Right cardiac atrium (tissue), 5 donors: ENCODE measurements at regions of chr6 and their contacts with region 1.

Region 1: DNA sequence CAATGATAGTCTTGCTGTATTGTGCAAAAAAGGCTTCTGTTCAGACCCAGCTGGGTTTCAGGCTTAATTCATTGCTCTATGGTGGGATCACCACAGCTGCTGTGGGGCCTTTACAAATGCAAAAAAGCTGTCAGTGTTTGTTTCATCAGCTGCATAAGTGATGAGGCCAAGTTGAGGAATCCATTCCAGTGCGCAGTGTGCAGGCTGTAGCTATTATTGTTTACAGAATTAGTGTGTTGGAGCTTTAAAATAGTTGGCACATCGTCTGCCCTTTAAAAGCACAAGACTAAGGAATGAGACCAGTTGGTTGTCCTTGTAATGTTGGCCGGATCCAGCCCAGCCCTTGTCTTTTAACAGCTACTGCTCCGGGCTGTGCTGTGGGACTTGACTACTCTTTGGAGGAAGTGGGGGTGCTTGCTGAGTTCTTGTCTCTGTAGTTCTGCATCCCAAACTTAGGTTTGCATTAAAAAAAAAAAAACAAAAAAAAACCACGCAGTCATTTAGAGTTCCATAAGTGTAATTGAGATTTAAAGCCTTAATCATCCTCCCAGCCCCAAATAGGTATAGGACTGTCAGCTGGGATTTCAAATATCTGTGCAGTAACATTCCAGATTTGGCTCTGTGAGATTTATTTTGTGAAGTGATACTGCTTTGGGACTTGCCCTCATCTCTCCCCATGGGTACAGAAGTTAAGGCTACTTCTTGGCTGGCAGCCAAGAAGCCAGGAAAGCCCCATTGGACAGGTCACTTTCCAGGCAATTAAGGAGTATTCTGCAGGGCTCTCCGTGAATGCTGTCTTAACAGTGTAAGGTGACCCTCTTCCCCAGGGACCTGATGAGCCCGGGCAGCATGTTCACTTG is 19.3 kb downstream of the JARID2 start:
- DNase-seq: peak in 1 of 3 donors; percentile 75
- ATAC-seq: peak; percentile 52 to 61
- H3K4me3 ChIP-seq: no peak overlapping the region
- H3K27ac ChIP-seq: peak overlapping the region; percentile 26
- H3K4me1 ChIP-seq: peaks cover 40% of the 10 kb centered on the region
- H3K27me3 ChIP-seq: no peaks in the 10 kb centered on the region

Region 2: DNA sequence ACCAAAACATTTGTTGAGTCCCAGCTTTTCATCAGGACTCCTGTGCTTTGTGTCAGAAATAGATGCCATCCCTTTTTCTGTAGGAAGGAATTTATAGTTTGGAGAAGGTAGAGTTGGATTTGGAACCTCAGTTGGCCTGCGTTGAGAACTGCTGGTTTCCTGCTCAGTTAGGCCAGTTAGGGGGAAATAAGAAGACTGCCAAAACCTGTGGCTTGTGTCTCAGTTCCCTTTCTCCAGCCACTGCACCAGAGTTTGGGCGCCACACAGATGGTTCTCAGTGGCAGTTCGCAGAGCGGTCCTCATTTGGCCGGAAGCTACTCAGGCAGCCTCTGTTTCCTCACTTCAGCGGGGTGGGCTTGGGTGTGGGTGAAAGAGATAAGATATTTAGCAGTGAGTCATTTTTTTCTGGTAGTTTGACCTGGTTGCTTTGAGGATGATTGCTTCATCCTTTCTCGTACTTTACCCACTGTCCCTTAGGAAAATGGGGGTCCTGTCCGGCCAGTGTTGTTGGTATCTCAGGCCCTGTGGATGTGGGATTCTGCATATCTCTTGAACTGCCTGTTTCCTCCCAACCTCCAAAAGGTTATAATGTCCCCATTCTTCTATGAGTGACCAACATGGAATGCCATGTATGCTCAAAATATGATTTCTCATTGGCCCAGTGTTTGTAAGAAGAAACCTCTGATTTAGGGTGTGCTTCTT is 34.4 kb after region 1 on chr6:
- intact Hi-C with region 1: loop called in 1 of 4 experiments (anchors 5 kb)
- DNase-seq: peak; percentile 69 to 83 (median 75)
- ATAC-seq: peak; percentile 77 to 86
- H3K4me3 ChIP-seq: no peak overlapping the region
- H3K27ac ChIP-seq: no peak overlapping the region
- H3K4me1 ChIP-seq: peaks cover 20% of the 10 kb centered on the region
- H3K27me3 ChIP-seq: no peaks in the 10 kb centered on the region

Region 3: GRCh38 chr6:15409301-15410125 is 144.4 kb after region 1 on chr6:
- intact Hi-C with region 1: no loop called
- DNase-seq: no peak
- ATAC-seq: peak; percentile 34 to 50
- H3K4me3 ChIP-seq: no peak overlapping the region
- H3K27ac ChIP-seq: no peak overlapping the region
- H3K4me1 ChIP-seq: peaks cover 8% of the 10 kb centered on the region
- H3K27me3 ChIP-seq: no peaks in the 10 kb centered on the region

Region 4: DNA sequence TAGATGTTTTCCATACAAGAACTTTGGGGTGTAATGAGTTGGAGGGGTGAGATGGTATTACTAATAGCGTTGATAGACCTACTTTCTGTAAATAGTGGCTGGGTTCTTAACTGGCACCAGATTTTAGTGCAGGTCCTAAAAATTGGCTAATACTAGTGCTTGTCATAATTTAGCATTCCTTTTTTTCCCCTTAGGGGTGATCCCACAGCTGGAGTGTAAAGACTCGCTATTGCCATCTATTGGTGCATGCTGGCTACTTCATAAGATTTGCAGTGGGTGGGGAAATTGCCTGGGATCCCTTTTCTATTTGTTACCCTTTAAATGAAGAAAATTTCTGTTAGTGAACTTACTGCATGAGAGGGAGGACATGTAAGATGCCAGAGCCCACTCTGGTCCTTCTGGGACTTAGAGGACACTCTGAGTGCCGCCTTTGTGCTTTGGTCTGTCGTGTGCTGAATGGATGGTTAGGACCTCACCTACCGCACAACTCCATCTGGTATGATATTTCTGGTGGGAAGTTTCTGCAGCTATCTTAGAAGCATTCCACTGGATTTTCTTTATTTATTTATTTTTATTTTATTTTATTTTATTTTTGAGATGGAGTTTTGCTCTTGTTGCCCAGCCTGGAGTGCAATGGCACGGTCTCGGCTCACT is 176.2 kb after region 1 on chr6:
- intact Hi-C with region 1: loop called in 1 of 4 experiments (anchors 5 kb)
- DNase-seq: no peak
- ATAC-seq: peak; percentile 79 to 82
- H3K4me3 ChIP-seq: no peak overlapping the region
- H3K27ac ChIP-seq: no peak overlapping the region
- H3K4me1 ChIP-seq: peaks cover 14% of the 10 kb centered on the region
- H3K27me3 ChIP-seq: no peaks in the 10 kb centered on the region